Psoas muscle (tissue), 8 donors: ENCODE measurements at regions of chr1 and their contacts with region 1.

Region 1: GRCh38 chr1:40668769-40669525 is 3.5 kb upstream of the RIMS3 start:
- DNase-seq: peak; percentile 73 to 88
- ATAC-seq: peak; percentile 73 to 89 (median 85)
- H3K4me3 ChIP-seq: peak overlapping the region; percentile 48
- H3K27ac ChIP-seq: no peak overlapping the region
- H3K4me1 ChIP-seq: peaks cover 8% of the 10 kb centered on the region
- H3K27me3 ChIP-seq: no peaks in the 10 kb centered on the region
- CTCF ChIP-seq: peak; percentile 96

Region 2: GRCh38 chr1:40612345-40612831 is 56.6 kb before region 1 on chr1:
- intact Hi-C with region 1: loop called (anchors 5 kb)
- DNase-seq: peak in 1 of 2 donors; percentile 27
- ATAC-seq: peak; percentile 75 to 95 (median 93)
- H3K4me3 ChIP-seq: no peak overlapping the region
- H3K27ac ChIP-seq: no peak overlapping the region
- H3K4me1 ChIP-seq: no peaks in the 10 kb centered on the region
- H3K27me3 ChIP-seq: no peaks in the 10 kb centered on the region
- CTCF ChIP-seq: peak; percentile 86

Region 3: GRCh38 chr1:40625066-40625465 is 43.9 kb before region 1 on chr1:
- intact Hi-C with region 1: loop called in 1 of 2 experiments (anchors 5 kb)
- DNase-seq: no peak
- ATAC-seq: peak; percentile 57 to 68 (median 64)
- H3K4me3 ChIP-seq: no peak overlapping the region
- H3K27ac ChIP-seq: no peak overlapping the region
- H3K4me1 ChIP-seq: no peaks in the 10 kb centered on the region
- H3K27me3 ChIP-seq: no peaks in the 10 kb centered on the region
- CTCF ChIP-seq: peak; percentile 30

Region 4: GRCh38 chr1:40636767-40637166 is 32.2 kb before region 1 on chr1:
- intact Hi-C with region 1: no loop called
- DNase-seq: no peak
- ATAC-seq: no peak
- H3K4me3 ChIP-seq: no peak overlapping the region
- H3K27ac ChIP-seq: no peak overlapping the region
- H3K4me1 ChIP-seq: no peaks in the 10 kb centered on the region
- H3K27me3 ChIP-seq: no peaks in the 10 kb centered on the region
- CTCF ChIP-seq: no peak